K562 (cell line): ENCODE measurements at regions of chr9 and their contacts with region 1.

Region 1: GRCh38 chr9:96327694-96328352 is 25.8 kb upstream of the HSD17B3 start:
- DNase-seq: peak; percentile 52 to 67 (median 66)
- ATAC-seq: peak; percentile 85
- H3K4me3 ChIP-seq: no peak overlapping the region
- H3K27ac ChIP-seq: no peak overlapping the region
- H3K4me1 ChIP-seq: no peaks in the 10 kb centered on the region
- H3K27me3 ChIP-seq: no peaks in the 10 kb centered on the region
- CTCF ChIP-seq: peak; percentile 62 to 72 (median 67)
- EP300 ChIP-seq: no peak
- POLR2A ChIP-seq: no peak
- RAD21 ChIP-seq: peak; percentile 64 to 78

Region 2: GRCh38 chr9:96418074-96418809 is 90.4 kb after region 1 on chr9 and contains the start of gene ZNF367:
- CTCF ChIA-PET with region 1: no interaction called
- POLR2A ChIA-PET with region 1: interaction called, 3 read pairs
- in situ Hi-C with region 1: no loop called
- intact Hi-C with region 1: loop called (anchors 10 kb)
- DNase-seq: peak; percentile 89 to 97 (median 94)
- ATAC-seq: peak; percentile 88
- H3K4me3 ChIP-seq: peak within 1 kb of the TSS; percentile 95
- H3K27ac ChIP-seq: peak within 1 kb of the TSS; percentile 100
- H3K4me1 ChIP-seq: peaks cover 23 to 26% of the 10 kb centered on the region in 2 experiments; a peak in 4 of 5 replicates
- H3K27me3 ChIP-seq: no peaks in the 10 kb centered on the region
- CTCF ChIP-seq: 0 out of 6 replicates have a peak, but pooled peaks of 1 of the 3 experiments have one; percentile 1
- EP300 ChIP-seq: no peak
- POLR2A ChIP-seq: peak; percentile 91
- RAD21 ChIP-seq: no peak
- polyA plus RNA-seq, gene ZNF367: 2.7 TPM

Region 3: DNA sequence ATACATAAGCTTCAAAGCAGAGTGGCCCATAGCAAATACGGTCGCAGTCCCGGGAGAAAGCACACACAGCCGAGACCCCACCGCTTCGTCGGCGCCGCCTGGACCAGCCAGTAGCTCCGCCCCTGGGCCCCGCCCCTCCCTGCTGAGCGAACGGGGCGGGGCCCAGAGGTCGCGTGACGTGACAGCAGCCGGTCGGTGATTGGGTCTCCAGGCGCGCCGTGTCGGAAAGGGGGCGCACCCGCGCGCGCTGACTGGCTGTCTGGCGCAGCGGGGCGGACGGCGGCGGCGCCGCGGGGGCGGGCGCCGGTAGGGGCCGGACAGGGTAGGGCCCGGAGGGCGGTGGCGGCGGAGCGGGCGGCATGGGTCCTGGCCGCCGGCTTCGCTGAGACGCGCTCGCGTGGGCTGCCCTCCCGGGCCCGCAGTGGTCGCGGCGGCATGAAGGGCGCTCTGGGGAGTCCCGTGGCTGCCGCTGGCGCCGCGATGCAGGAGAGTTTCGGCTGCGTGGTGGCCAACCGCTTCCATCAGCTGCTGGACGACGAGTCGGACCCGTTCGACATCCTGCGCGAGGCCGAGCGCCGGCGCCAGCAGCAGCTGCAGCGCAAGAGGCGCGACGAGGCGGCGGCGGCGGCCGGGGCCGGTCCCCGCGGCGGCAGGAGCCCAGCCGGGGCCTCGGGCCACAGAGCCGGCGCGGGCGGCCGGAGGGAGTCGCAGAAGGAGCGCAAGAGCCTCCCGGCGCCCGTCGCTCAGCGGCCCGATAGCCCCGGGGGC is 122.2 kb after region 1 on chr9 and contains the start of gene HABP4:
- CTCF ChIA-PET with region 1: no interaction called
- POLR2A ChIA-PET with region 1: no interaction called
- in situ Hi-C with region 1: no loop called
- intact Hi-C with region 1: loop called (anchors 10 kb)
- DNase-seq: peak; percentile 96 to 99 (median 99)
- ATAC-seq: peak; percentile 100
- H3K4me3 ChIP-seq: peak within 1 kb of the TSS; percentile 58
- H3K27ac ChIP-seq: no peak within 1 kb of the TSS
- H3K4me1 ChIP-seq: peaks cover 2 to 18% of the 10 kb centered on the region in 2 experiments; a peak in 3 of 5 replicates
- H3K27me3 ChIP-seq: peaks cover 2 to 14% of the 10 kb centered on the region in 2 experiments; a peak in 2 of 5 replicates
- CTCF ChIP-seq: peak in 1 of 3 experiments; percentile 8; a peak in 1 of 6 replicates
- EP300 ChIP-seq: no peak
- POLR2A ChIP-seq: no peak
- RAD21 ChIP-seq: no peak
- polyA plus RNA-seq, gene HABP4: 0.38 to 0.52 TPM

Region 4: GRCh38 chr9:96514108-96514799 is 186.4 kb after region 1 on chr9:
- CTCF ChIA-PET with region 1: no interaction called
- POLR2A ChIA-PET with region 1: no interaction called
- in situ Hi-C with region 1: no loop called
- intact Hi-C with region 1: no loop called
- DNase-seq: no peak
- ATAC-seq: no peak
- H3K4me3 ChIP-seq: no peak overlapping the region
- H3K27ac ChIP-seq: no peak overlapping the region
- H3K4me1 ChIP-seq: no peaks in the 10 kb centered on the region
- H3K27me3 ChIP-seq: no peaks in the 10 kb centered on the region
- CTCF ChIP-seq: no peak
- EP300 ChIP-seq: no peak
- POLR2A ChIP-seq: no peak
- RAD21 ChIP-seq: no peak

Region 5: GRCh38 chr9:96661711-96662110 is 333.9 kb after region 1 on chr9:
- CTCF ChIA-PET with region 1: interaction called, 11 read pairs
- POLR2A ChIA-PET with region 1: no interaction called
- in situ Hi-C with region 1: loop called (anchors 10 kb)
- intact Hi-C with region 1: no loop called
- DNase-seq: no peak
- ATAC-seq: no peak
- H3K4me3 ChIP-seq: no peak overlapping the region
- H3K27ac ChIP-seq: no peak overlapping the region
- H3K4me1 ChIP-seq: peaks cover 0 to 4% of the 10 kb centered on the region in 2 experiments; a peak in 1 of 5 replicates
- H3K27me3 ChIP-seq: no peaks in the 10 kb centered on the region; a peak in 1 of 5 replicates
- CTCF ChIP-seq: no peak
- EP300 ChIP-seq: no peak
- POLR2A ChIP-seq: no peak
- RAD21 ChIP-seq: no peak

Region 6: GRCh38 chr9:96667361-96667728 is 339.5 kb after region 1 on chr9:
- CTCF ChIA-PET with region 1: interaction called, 11 read pairs
- POLR2A ChIA-PET with region 1: no interaction called
- in situ Hi-C with region 1: loop called (anchors 10 kb)
- intact Hi-C with region 1: no loop called
- DNase-seq: no peak
- ATAC-seq: no peak
- H3K4me3 ChIP-seq: no peak overlapping the region
- H3K27ac ChIP-seq: no peak overlapping the region
- H3K4me1 ChIP-seq: peaks cover 0 to 4% of the 10 kb centered on the region in 2 experiments; a peak in 1 of 5 replicates
- H3K27me3 ChIP-seq: no peaks in the 10 kb centered on the region
- CTCF ChIP-seq: no peak
- EP300 ChIP-seq: no peak
- POLR2A ChIP-seq: no peak
- RAD21 ChIP-seq: no peak